Activated naive CD4-positive, alpha-beta T cell treated with anti-CD3 and anti-CD28 coated beads for 36 hours (primary cell): ENCODE measurements at regions of chr4 and their contacts with region 1.

Region 1: DNA sequence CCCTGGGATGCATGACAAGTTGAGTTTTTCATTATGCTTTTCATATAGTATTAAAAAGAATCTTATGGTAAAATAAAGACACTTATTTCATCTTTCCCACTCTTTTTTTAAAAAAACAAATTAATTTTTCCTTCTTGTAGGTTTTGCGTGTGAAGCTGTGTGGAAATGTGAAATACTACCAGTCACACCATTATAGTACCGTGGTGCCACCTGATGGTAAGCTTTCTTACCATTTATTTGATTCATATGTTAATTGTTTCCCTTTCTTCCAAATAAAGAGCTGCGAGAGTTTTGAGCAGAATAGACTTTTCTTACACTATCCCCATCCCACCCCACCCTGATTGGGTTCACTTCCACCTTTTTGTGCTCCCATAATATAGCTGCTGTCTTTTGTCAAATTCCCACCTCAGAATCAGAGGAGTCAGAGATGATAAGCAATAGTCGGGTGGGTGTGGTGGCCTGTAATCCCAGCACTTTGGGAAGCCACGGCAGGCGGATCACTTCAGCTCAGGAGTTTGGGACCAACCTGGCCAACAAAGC is 44.3 kb downstream of the CASP6 start:
- DNase-seq: peak; percentile 63
- H3K4me3 Mint-ChIP-seq: no peak overlapping the region
- H3K27ac Mint-ChIP-seq: no peak overlapping the region
- H3K4me1 Mint-ChIP-seq: peaks cover 46% of the 10 kb centered on the region
- H3K27me3 Mint-ChIP-seq: no peaks in the 10 kb centered on the region

Region 2: GRCh38 chr4:109574102-109574850 is 84.7 kb before region 1 on chr4:
- CTCF ChIA-PET with region 1: no interaction called
- intact Hi-C with region 1: loop called (anchors 2 kb)
- DNase-seq: peak; percentile 42
- H3K4me3 Mint-ChIP-seq: peak overlapping the region; percentile 39
- H3K27ac Mint-ChIP-seq: no peak overlapping the region
- H3K4me1 Mint-ChIP-seq: peaks cover 74% of the 10 kb centered on the region
- H3K27me3 Mint-ChIP-seq: no peaks in the 10 kb centered on the region